PC-9 (cell line): ENCODE measurements at regions of chr22 and their contacts with region 1.

Region 1: DNA sequence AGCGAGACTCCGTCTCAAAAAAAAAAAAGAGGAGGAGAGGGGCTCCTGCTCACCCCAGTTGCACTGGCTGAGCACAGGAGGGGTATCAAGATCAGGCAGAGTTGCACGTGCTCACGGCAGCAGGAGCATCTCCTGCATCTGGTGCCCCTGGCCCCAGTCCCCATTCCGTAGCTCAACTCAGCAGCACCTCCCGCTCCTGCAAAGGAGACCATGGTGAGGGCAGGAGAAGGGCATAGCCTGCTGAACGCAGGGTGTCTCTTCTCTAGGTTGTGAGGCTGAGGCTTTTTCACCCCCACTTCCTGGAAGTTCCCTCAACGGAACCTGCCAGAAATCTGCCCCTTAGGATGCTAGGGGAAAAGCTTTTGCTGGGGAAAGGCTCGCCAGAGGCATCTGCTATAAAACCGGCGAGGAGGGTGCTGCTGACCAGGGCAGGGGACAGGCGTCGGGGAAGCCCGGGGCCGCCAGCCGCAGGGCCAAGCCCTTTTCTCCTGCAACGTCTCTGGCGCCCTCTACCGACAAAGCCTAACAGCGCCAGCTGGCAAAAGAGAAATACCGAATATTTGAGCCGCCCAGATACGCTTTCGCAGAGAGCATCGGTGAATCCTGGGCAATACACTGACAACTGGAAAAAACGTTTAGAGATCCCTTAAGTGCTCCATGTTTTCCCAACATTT is 1.0 kb upstream of the PPP6R2 start:
- DNase-seq: peak; percentile 82 to 88
- H3K4me3 ChIP-seq: peak overlapping the region; percentile 66
- H3K27ac ChIP-seq: peak overlapping the region; percentile 18; the same call in 1 of the 2 replicates
- H3K4me1 ChIP-seq: 0 out of 2 replicates have a peak, but pooled peaks cover 4% of the 10 kb centered on the region
- H3K27me3 ChIP-seq: no peaks in the 10 kb centered on the region
- CTCF ChIP-seq: peak; percentile 99

Region 2: DNA sequence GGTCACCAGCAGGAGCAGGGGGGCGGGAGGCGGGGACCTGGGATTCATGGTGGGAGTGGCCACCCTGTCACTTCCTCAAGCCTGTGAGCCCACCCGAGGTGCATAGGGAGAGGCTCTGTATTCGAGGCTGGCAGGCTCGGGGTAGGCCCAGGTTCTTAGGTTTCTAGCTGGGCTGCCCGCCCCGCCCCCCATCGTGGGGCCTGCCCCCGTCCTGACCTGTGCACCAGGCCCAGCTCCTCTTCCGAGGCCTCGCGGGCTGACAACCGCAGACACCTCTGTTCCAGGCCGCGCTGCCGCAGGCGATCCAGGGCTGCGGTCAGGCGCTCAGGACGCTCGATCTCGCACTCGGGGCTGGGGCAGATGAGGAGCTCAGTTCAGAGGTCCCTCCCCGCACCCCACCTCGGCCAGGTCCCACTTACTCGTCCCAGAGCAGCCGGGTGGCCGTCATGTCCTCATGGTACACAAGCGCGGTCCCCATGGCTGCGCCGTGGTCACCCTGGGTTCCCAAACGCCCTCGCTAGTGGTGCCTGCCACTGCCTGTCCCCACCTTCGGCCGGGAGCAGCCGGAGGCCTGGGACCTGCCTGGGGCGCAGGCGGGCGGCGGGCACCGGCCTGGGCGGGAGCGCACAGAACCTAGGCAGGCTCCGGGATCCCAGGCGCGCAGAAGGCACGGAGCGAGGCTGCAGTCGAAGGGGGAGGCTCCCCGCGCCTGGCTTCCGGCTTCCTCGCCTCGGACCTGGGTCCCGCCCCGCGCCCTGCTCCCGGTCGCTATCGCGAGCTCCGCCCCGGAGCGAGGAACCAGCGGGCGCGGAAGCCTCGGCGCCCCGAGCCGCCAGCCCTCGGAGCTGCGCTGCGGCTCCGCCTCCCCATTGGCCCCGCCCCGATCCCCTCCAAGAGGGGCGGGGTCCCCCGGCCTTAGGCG is 91.3 kb before region 1 on chr22 and contains the start of gene HDAC10:
- CTCF ChIA-PET with region 1: no interaction called
- POLR2A ChIA-PET with region 1: no interaction called
- intact Hi-C with region 1: loop called (anchors 1 kb)
- DNase-seq: peak; percentile 72 to 83
- H3K4me3 ChIP-seq: peak within 1 kb of the TSS; percentile 84
- H3K27ac ChIP-seq: peak within 1 kb of the TSS; percentile 37
- H3K4me1 ChIP-seq: peaks cover 22% of the 10 kb centered on the region
- H3K27me3 ChIP-seq: no peaks in the 10 kb centered on the region
- CTCF ChIP-seq: 0 out of 2 replicates have a peak, but pooled peaks have one; percentile 19
- total RNA-seq, gene HDAC10: 80.5 and 101 TPM in 2 replicates

Region 3: DNA sequence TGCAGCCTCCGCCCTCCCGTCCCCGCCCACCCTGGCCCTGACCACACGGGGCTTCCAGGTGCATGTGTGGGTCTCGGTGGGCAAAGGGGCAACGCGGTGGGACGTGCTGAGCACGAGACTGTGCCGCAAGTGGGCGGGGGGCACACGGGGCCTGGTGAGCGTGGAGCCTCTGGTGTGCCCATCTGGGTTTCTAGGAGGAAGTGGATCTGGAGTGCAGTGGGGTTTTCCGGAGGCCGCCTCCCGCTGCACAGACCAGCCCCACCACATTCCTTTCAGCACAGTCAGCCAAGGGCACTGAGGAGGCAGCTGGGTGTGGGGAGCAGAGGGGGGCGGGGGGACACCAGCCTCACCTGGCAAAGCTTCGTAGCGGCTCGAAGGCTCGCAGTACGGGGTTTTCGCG is 59.8 kb before region 1 on chr22:
- CTCF ChIA-PET with region 1: no interaction called
- POLR2A ChIA-PET with region 1: no interaction called
- intact Hi-C with region 1: loop called (anchors 2 kb)
- DNase-seq: peak; percentile 93 to 99
- H3K4me3 ChIP-seq: peak overlapping the region; percentile 45
- H3K27ac ChIP-seq: peak overlapping the region; percentile 73
- H3K4me1 ChIP-seq: peaks cover 38% of the 10 kb centered on the region
- H3K27me3 ChIP-seq: no peaks in the 10 kb centered on the region
- CTCF ChIP-seq: no peak

Region 4: GRCh38 chr22:50326959-50327710 is 15.0 kb before region 1 on chr22 and contains the start of gene DENND6B:
- CTCF ChIA-PET with region 1: no interaction called
- POLR2A ChIA-PET with region 1: interaction called, 15 read pairs
- intact Hi-C with region 1: no loop called
- DNase-seq: peak; percentile 62 to 80
- H3K4me3 ChIP-seq: peak within 1 kb of the TSS; percentile 92
- H3K27ac ChIP-seq: peak within 1 kb of the TSS; percentile 46
- H3K4me1 ChIP-seq: peaks cover 33% of the 10 kb centered on the region
- H3K27me3 ChIP-seq: no peaks in the 10 kb centered on the region
- CTCF ChIP-seq: peak; percentile 61
- total RNA-seq, gene DENND6B: 12.1 and 14.3 TPM in 2 replicates